HepG2 (cell line): ENCODE measurements at regions of chr5 and their contacts with region 1.

Region 1: GRCh38 chr5:172770675-172771438 is at the start of gene DUSP1:
- DNase-seq: peak; percentile 88
- ATAC-seq: peak; percentile 64
- H3K4me3 ChIP-seq: peak within 1 kb of the TSS; percentile 90 to 94 (median 92)
- H3K27ac ChIP-seq: peak within 1 kb of the TSS; percentile 98
- H3K4me1 ChIP-seq: peaks cover 80% of the 10 kb centered on the region
- H3K27me3 ChIP-seq: no peaks in the 10 kb centered on the region; a peak in 1 of 5 replicates
- CTCF ChIP-seq: peak; percentile 64
- EP300 ChIP-seq: no peak
- POLR2A ChIP-seq: peak in 1 of 2 experiments; percentile 98; a peak in 2 of 4 replicates
- RAD21 ChIP-seq: peak; percentile 97
- total RNA-seq, gene DUSP1: 18.0 and 27.1 TPM in 2 replicates

Region 2: DNA sequence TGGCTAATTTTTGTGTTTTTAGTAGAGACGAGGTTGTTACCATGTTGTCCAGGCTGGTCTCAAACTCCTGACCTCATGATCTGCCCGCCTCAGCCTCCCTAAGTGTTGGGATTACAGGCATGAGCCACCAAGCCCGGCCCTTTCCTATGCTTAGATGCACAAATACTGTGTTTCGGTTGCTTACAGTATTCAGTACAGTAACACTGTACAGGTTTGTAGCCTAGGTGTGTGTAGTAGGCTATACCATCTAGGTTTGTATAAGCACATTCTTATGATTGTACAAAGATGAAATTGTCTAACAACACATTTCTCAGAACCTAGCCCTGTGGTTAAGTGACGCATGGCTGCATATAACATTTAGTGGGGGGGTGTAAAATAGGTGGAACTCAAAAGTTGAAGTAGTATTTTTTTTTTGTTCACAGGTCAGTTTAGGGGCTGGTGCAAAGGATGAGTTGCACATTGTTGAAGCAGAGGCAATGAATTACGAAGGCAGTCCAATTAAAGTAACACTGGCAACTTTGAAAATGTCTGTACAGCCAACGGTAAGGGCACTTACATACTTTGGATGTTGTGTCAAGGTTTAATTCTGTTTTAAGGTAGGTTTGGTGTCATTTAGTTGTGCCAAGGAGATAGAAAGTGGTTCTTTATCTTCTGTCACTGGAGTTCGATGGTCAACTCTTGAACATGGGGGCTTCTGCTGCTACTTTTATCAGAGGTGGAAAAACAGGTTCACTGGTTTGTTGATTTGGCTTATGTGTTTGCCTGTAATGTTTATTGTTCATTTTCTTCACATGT is 1379.8 kb before region 1 on chr5:
- CTCF ChIA-PET with region 1: no interaction called
- POLR2A ChIA-PET with region 1: no interaction called
- in situ Hi-C with region 1: no loop called
- intact Hi-C with region 1: no loop called
- DNase-seq: no peak
- ATAC-seq: no peak
- H3K4me3 ChIP-seq: peak overlapping the region; percentile 88 to 93 (median 92)
- H3K27ac ChIP-seq: no peak overlapping the region
- H3K4me1 ChIP-seq: peaks cover 69% of the 10 kb centered on the region
- H3K27me3 ChIP-seq: no peaks in the 10 kb centered on the region; a peak in 1 of 5 replicates
- CTCF ChIP-seq: no peak
- EP300 ChIP-seq: no peak
- POLR2A ChIP-seq: peak in 1 of 2 experiments; percentile 51; a peak in 1 of 4 replicates
- RAD21 ChIP-seq: no peak

Region 3: GRCh38 chr5:172724242-172725183 is 46.3 kb before region 1 on chr5:
- CTCF ChIA-PET with region 1: no interaction called
- POLR2A ChIA-PET with region 1: interaction called, 16 read pairs
- in situ Hi-C with region 1: no loop called
- intact Hi-C with region 1: no loop called
- DNase-seq: peak; percentile 64
- ATAC-seq: peak; percentile 65
- H3K4me3 ChIP-seq: peak overlapping the region in 1 of 3 experiments; percentile 30; a peak in 2 of 6 replicates
- H3K27ac ChIP-seq: no peak overlapping the region
- H3K4me1 ChIP-seq: peaks cover 82% of the 10 kb centered on the region
- H3K27me3 ChIP-seq: peaks cover 4 to 28% of the 10 kb centered on the region in 2 experiments; a peak in 4 of 5 replicates
- CTCF ChIP-seq: no peak
- EP300 ChIP-seq: peak in 1 of 2 experiments; percentile 64; a peak in 1 of 4 replicates
- POLR2A ChIP-seq: no peak
- RAD21 ChIP-seq: no peak

Region 4: DNA sequence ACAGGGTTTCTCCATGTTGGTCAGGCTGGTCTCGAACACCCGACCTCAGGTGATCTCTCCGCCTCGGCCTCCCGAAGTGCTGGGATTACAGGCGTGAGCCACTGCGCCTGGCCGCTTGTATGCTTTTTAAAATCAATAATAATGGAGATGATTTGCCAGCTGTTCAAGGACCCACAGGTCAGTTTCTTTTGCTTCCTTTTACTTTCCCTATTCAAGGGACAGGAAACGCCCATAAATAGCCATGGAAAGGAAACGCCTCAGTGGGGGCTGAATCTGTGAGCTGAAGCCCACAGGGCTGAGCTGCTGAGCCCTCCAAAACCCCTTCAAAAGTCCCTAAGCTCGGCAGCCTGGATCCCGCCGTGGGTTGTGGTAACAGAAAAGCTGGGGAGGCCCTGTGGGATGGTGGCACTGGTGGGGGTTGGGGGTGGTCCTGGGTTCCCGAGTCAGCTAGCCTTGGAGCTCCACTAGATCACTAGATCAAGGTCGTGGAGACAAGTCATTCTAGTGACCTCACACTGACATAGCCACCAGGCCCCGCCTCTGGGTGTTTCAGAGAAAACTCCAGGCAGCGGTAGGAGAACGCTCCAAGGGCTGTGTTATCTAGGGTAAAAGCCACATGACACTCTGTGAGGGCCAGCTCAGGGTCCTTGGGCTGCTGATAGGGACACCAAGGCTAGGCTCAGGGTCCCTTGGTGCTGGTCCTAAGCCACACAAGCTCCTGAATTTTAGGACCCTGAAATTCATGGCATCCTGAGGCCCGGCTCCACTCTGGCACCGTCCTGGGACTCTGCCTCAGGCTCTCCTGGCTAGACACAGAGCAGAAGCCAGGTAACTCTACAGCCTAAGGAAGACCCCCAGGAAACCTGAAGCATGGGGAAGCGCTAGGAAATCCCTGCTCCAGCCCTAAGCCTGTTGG is 18.2 kb after region 1 on chr5:
- CTCF ChIA-PET with region 1: no interaction called
- POLR2A ChIA-PET with region 1: interaction called, 425 read pairs
- in situ Hi-C with region 1: no loop called
- intact Hi-C with region 1: loop called (anchors 1 kb)
- DNase-seq: peak; percentile 85
- ATAC-seq: peak; percentile 82
- H3K4me3 ChIP-seq: peak overlapping the region; percentile 44 to 62 (median 45); a peak in 5 of 6 replicates
- H3K27ac ChIP-seq: peak overlapping the region; percentile 92
- H3K4me1 ChIP-seq: peaks cover 88% of the 10 kb centered on the region
- H3K27me3 ChIP-seq: no peaks in the 10 kb centered on the region
- CTCF ChIP-seq: peak; percentile 21; the same call in 1 of the 2 replicates
- EP300 ChIP-seq: no peak
- POLR2A ChIP-seq: peak in 1 of 2 experiments; percentile 66; a peak in 3 of 4 replicates
- RAD21 ChIP-seq: 0 out of 2 replicates have a peak, but pooled peaks have one; percentile 4

Region 5: DNA sequence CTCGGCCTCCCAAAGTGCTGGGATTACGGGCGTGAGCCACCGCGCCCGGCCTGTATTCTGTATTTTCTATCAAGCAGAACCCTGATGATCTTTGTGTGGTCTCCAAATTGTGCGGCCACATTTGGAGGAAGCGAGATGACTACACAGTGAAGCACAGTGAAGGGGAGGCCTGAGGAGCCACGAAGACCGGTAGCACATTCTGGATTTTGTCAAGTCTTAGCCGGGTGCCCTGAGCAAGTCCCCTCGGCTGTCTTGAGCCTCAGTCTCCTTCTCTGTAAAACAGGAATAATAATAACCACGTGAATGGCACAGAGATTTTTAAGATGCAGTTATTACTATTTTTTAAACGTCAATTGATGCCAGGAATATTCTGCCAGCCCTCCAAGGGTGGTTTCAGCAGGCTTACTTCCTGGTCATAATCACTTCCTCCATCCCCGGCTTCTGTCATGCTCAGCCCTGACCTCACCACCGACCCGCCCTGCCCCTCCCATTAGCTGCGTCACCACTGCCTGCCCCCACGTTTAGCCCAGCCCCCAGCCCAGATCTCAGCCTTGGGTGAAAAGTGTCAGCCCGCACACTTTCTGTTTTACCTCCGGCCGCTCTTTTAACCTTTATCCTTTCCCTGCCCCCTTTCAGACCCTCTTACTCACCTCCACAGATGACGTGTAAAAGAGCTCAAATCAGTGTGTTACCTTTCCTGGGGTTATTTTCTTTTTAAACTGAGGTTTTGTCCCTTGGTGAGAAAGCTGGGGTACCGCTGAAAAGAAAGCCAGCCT is 36.2 kb after region 1 on chr5:
- CTCF ChIA-PET with region 1: no interaction called
- POLR2A ChIA-PET with region 1: interaction called, 48 read pairs
- in situ Hi-C with region 1: no loop called
- intact Hi-C with region 1: no loop called
- DNase-seq: peak; percentile 80
- ATAC-seq: peak; percentile 95
- H3K4me3 ChIP-seq: peak overlapping the region; percentile 47 to 56 (median 50)
- H3K27ac ChIP-seq: peak overlapping the region; percentile 67
- H3K4me1 ChIP-seq: peaks cover 43% of the 10 kb centered on the region
- H3K27me3 ChIP-seq: no peaks in the 10 kb centered on the region
- CTCF ChIP-seq: no peak
- EP300 ChIP-seq: peak in 1 of 2 experiments; percentile 44; a peak in 1 of 4 replicates
- POLR2A ChIP-seq: peak; percentile 20 to 54; a peak in 2 of 4 replicates
- RAD21 ChIP-seq: no peak

Region 6: DNA sequence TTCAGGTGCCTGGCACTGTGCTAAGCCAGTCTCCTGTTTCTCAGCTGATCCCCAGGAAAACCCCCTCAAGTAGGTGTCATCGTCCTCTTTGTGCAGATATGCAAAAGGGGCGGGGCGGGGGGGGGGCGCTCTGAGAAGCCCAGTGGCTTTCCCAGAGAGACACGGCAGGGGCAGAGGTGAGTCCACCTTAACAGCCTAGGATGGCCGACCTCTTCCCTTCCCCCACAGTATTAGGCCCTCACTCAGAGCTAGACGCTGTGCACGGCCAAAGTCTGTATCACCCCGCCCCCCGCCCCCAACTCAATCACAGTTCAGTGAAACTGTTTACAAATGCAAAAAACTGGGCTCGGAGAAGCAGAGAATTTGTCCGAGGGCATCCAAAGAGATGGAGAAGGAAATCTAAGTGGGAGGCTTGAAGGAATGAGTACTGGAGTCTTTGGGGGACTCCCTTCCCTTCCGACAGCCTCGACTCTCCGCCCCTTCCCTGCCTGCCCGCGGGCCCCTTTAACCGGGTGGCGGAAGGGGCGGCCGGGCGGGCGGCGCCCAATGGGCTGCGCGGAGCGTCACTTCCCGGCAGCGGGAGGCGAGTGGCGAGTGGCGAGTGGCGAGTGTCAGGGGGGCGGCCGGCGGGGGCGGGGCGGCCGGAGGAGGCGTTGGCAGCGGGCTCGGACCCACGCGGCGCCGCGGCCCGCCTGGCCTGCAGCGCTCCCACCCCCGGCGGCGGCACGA is 63.0 kb after region 1 on chr5 and contains the start of gene ERGIC1:
- CTCF ChIA-PET with region 1: no interaction called
- POLR2A ChIA-PET with region 1: interaction called, 50 read pairs
- in situ Hi-C with region 1: no loop called
- intact Hi-C with region 1: loop called (anchors 2 kb)
- DNase-seq: peak; percentile 64
- ATAC-seq: peak; percentile 84
- H3K4me3 ChIP-seq: peak within 1 kb of the TSS; percentile 83 to 95 (median 86)
- H3K27ac ChIP-seq: peak within 1 kb of the TSS; percentile 90
- H3K4me1 ChIP-seq: peaks cover 71% of the 10 kb centered on the region
- H3K27me3 ChIP-seq: no peaks in the 10 kb centered on the region; a peak in 1 of 5 replicates
- CTCF ChIP-seq: no peak
- EP300 ChIP-seq: 0 out of 4 replicates have a peak, but pooled peaks have one; percentile 28 to 30
- POLR2A ChIP-seq: peak; percentile 76 to 88
- RAD21 ChIP-seq: peak; percentile 44
- total RNA-seq, gene ERGIC1: 56.6 and 78.5 TPM in 2 replicates

Region 7: GRCh38 chr5:172886974-172887501 is 116.2 kb after region 1 on chr5:
- CTCF ChIA-PET with region 1: no interaction called
- POLR2A ChIA-PET with region 1: interaction called, 16 read pairs
- in situ Hi-C with region 1: no loop called
- intact Hi-C with region 1: no loop called
- DNase-seq: peak; percentile 85
- ATAC-seq: peak; percentile 64
- H3K4me3 ChIP-seq: no peak overlapping the region
- H3K27ac ChIP-seq: peak overlapping the region; percentile 41
- H3K4me1 ChIP-seq: peaks cover 18% of the 10 kb centered on the region
- H3K27me3 ChIP-seq: no peaks in the 10 kb centered on the region
- CTCF ChIP-seq: no peak
- EP300 ChIP-seq: peak; percentile 35 to 67; a peak in 1 of 4 replicates
- POLR2A ChIP-seq: no peak
- RAD21 ChIP-seq: no peak